GM12878 (cell line): ENCODE measurements at regions of chr5 and their contacts with region 1.

Region 1: DNA sequence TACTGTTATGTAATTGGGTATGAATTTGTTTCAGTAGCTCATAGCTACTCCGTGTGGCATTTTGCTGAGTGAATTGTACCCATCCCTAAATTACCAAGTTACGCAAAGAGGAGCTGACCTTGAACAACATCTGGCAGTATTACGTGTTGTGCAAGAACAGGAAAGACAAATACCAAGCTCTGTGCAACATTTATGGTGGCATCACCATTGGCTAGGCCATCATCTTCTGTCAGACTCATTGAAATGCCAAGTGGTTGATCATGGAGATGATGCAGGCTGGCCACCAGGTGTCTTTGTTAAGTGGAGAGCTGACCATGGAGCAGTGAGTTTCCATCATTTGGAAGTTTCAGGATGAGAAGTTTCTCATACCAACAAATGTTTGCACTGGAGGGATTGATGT is 15.0 kb downstream of the ZSWIM6 start:
- DNase-seq: no peak
- ATAC-seq: no peak
- H3K4me3 ChIP-seq: no peak overlapping the region
- H3K27ac ChIP-seq: no peak overlapping the region
- H3K4me1 ChIP-seq: no peaks in the 10 kb centered on the region
- H3K27me3 ChIP-seq: no peaks in the 10 kb centered on the region
- CTCF ChIP-seq: no peak
- EP300 ChIP-seq: no peak
- POLR2A ChIP-seq: no peak
- RAD21 ChIP-seq: no peak

Region 2: GRCh38 chr5:61357745-61358144 is 10.7 kb after region 1 on chr5:
- CTCF ChIA-PET with region 1: interaction called, 24 read pairs
- POLR2A ChIA-PET with region 1: no interaction called
- RAD21 ChIA-PET with region 1: no interaction called
- SMC1A ChIA-PET with region 1: interaction called, 4 read pairs
- in situ Hi-C with region 1: no loop called
- intact Hi-C with region 1: no loop called
- DNase-seq: no peak
- ATAC-seq: no peak
- H3K4me3 ChIP-seq: no peak overlapping the region
- H3K27ac ChIP-seq: no peak overlapping the region
- H3K4me1 ChIP-seq: no peaks in the 10 kb centered on the region
- H3K27me3 ChIP-seq: no peaks in the 10 kb centered on the region
- CTCF ChIP-seq: peak; percentile 27 to 40 (median 27); a peak in 5 of 6 replicates
- EP300 ChIP-seq: no peak
- POLR2A ChIP-seq: no peak
- RAD21 ChIP-seq: peak; percentile 50